ENCODE measurements at regions of chr1 and their contacts with region 1.

Region 1: GRCh38 chr1:79193211-79194079 is 186.9 kb upstream of the ADGRL4 start:
- DNase-seq: peak; percentile 92
- H3K4me3 ChIP-seq: peak overlapping the region in 1 of 3 experiments; percentile 3
- H3K27ac ChIP-seq: peak overlapping the region; percentile 96
- H3K4me1 ChIP-seq: peaks cover 38% of the 10 kb centered on the region
- H3K27me3 ChIP-seq: no peaks in the 10 kb centered on the region
- CTCF ChIP-seq: no peak
- POLR2A ChIP-seq: no peak

Region 2: DNA sequence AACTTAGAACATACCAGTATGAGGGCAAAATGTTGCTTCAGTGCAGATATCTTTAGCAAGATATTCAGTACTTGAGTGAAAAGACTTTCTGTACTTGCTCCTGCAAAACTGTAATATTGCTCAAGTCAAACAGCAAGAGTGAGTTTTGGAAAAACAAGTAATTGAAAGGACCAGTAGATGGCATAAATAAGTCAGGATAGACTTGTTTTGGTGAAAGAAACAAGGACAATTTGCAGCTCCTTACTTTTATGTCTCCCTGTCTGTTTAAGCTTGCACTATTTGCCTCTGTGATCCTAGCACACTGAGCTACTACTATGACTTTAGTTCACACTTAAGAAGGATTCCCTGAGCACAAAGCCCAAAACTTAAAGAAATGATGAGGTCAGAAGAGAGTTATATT is 504.7 kb before region 1 on chr1:
- CTCF ChIA-PET with region 1: interaction called, 12 read pairs
- POLR2A ChIA-PET with region 1: no interaction called
- dilution Hi-C with region 1: no loop called
- intact Hi-C with region 1: no loop called
- DNase-seq: peak; percentile 56
- H3K4me3 ChIP-seq: no peak overlapping the region
- H3K27ac ChIP-seq: no peak overlapping the region
- H3K4me1 ChIP-seq: peaks cover 2% of the 10 kb centered on the region
- H3K27me3 ChIP-seq: no peaks in the 10 kb centered on the region
- CTCF ChIP-seq: no peak
- POLR2A ChIP-seq: no peak

Region 3: GRCh38 chr1:78864175-78864574 is 329.3 kb before region 1 on chr1:
- CTCF ChIA-PET with region 1: no interaction called
- POLR2A ChIA-PET with region 1: no interaction called
- dilution Hi-C with region 1: no loop called
- intact Hi-C with region 1: no loop called
- DNase-seq: no peak
- H3K4me3 ChIP-seq: no peak overlapping the region
- H3K27ac ChIP-seq: no peak overlapping the region
- H3K4me1 ChIP-seq: no peaks in the 10 kb centered on the region
- H3K27me3 ChIP-seq: no peaks in the 10 kb centered on the region
- CTCF ChIP-seq: no peak
- POLR2A ChIP-seq: no peak

Region 4: DNA sequence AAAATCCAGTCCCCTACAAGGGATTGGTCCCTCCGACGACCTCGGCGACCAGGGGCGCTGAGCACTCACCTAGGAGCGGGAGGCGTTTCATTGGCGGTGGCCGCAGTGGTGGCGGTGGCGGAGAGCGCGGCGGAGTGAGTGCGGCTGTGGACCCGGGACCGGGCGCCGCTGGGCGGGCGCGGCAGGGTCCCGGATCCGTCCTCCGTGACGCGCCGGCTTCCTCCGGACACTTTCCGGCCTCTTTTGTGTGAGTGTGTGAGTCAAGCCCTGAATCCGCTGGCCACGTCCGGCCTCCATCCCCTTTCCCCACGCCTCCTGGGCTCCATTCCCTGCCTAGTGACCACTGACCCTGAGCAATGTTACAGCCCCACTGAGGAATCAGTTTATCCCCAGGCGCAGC is 186.9 kb before region 1 on chr1 and contains the start of gene ADGRL4:
- CTCF ChIA-PET with region 1: interaction called, 3 read pairs
- POLR2A ChIA-PET with region 1: interaction called, 3 read pairs
- dilution Hi-C with region 1: no loop called
- intact Hi-C with region 1: loop called (anchors 1 kb)
- DNase-seq: peak; percentile 90
- H3K4me3 ChIP-seq: peak within 1 kb of the TSS; percentile 93 to 99 (median 97)
- H3K27ac ChIP-seq: peak within 1 kb of the TSS; percentile 97
- H3K4me1 ChIP-seq: peaks cover 47% of the 10 kb centered on the region
- H3K27me3 ChIP-seq: no peaks in the 10 kb centered on the region
- CTCF ChIP-seq: no peak
- POLR2A ChIP-seq: peak; percentile 90
- total RNA-seq, gene ADGRL4: 143 and 205 TPM in 2 replicates

Region 5: GRCh38 chr1:79069828-79070227 is 123.6 kb before region 1 on chr1:
- CTCF ChIA-PET with region 1: no interaction called
- POLR2A ChIA-PET with region 1: no interaction called
- dilution Hi-C with region 1: no loop called
- intact Hi-C with region 1: no loop called
- DNase-seq: no peak
- H3K4me3 ChIP-seq: no peak overlapping the region
- H3K27ac ChIP-seq: no peak overlapping the region
- H3K4me1 ChIP-seq: no peaks in the 10 kb centered on the region
- H3K27me3 ChIP-seq: no peaks in the 10 kb centered on the region
- CTCF ChIP-seq: no peak
- POLR2A ChIP-seq: no peak

Region 6: GRCh38 chr1:79124756-79125155 is 68.7 kb before region 1 on chr1:
- CTCF ChIA-PET with region 1: no interaction called
- POLR2A ChIA-PET with region 1: no interaction called
- dilution Hi-C with region 1: no loop called
- intact Hi-C with region 1: no loop called
- DNase-seq: peak; percentile 46
- H3K4me3 ChIP-seq: no peak overlapping the region
- H3K27ac ChIP-seq: no peak overlapping the region
- H3K4me1 ChIP-seq: peaks cover 12% of the 10 kb centered on the region
- H3K27me3 ChIP-seq: no peaks in the 10 kb centered on the region
- CTCF ChIP-seq: no peak
- POLR2A ChIP-seq: no peak

Region 7: DNA sequence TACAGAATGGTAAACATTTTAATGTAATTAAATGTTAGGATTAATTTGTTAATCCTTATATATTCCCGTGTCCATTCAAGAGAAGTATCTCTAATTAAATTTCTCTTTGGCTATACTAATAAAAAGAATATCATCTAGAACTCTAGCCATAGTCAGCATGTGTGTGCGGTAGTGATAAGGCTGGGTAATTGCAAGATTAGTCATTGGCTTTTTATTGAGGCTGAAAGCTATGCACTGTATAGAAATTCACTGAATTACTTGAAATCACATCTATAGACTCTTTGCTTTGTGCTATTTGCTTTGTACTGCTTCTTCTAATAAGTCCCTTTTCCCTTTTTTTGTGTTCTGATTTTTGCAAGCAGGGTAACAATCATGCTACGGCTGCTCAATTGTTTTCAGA is 42.0 kb before region 1 on chr1:
- CTCF ChIA-PET with region 1: no interaction called
- POLR2A ChIA-PET with region 1: no interaction called
- dilution Hi-C with region 1: no loop called
- intact Hi-C with region 1: loop called (anchors 1 kb)
- DNase-seq: peak; percentile 28
- H3K4me3 ChIP-seq: no peak overlapping the region
- H3K27ac ChIP-seq: peak overlapping the region; percentile 7
- H3K4me1 ChIP-seq: peaks cover 13% of the 10 kb centered on the region
- H3K27me3 ChIP-seq: no peaks in the 10 kb centered on the region
- CTCF ChIP-seq: no peak
- POLR2A ChIP-seq: no peak

Region 8: DNA sequence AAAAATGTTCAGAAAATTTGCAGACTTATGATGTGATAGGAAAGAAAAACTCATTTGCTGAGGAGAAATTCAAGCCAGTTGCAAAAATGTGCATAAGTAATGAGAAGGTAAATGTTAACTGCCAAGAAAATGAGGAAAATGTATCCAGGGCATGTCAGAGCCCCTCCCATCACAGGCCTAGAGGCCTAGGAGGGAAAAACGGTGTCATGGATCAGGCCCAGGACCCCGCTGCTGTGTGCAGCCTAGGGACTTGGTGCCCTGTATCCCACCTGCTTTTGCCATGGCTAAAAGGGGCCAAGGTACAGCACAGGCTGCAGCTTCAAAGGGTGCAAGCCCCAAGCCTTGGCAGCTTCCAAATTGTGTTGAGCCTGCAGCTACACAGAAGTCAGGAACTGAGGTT is 27.1 kb after region 1 on chr1:
- CTCF ChIA-PET with region 1: no interaction called
- POLR2A ChIA-PET with region 1: no interaction called
- dilution Hi-C with region 1: no loop called
- intact Hi-C with region 1: no loop called
- DNase-seq: no peak
- H3K4me3 ChIP-seq: no peak overlapping the region
- H3K27ac ChIP-seq: no peak overlapping the region
- H3K4me1 ChIP-seq: no peaks in the 10 kb centered on the region
- H3K27me3 ChIP-seq: no peaks in the 10 kb centered on the region
- CTCF ChIP-seq: no peak
- POLR2A ChIP-seq: no peak

Region 9: GRCh38 chr1:79235301-79236002 is 42.0 kb after region 1 on chr1:
- CTCF ChIA-PET with region 1: interaction called, 3 read pairs
- POLR2A ChIA-PET with region 1: no interaction called
- dilution Hi-C with region 1: no loop called
- intact Hi-C with region 1: loop called (anchors 1 kb)
- DNase-seq: peak; percentile 64
- H3K4me3 ChIP-seq: no peak overlapping the region
- H3K27ac ChIP-seq: peak overlapping the region; percentile 62
- H3K4me1 ChIP-seq: peaks cover 9% of the 10 kb centered on the region
- H3K27me3 ChIP-seq: no peaks in the 10 kb centered on the region
- CTCF ChIP-seq: no peak
- POLR2A ChIP-seq: no peak

Measured in endothelial cell of umbilical vein (primary cell).